Activated CD4-positive, alpha-beta T cell treated with anti-CD3 and anti-CD28 coated beads, Interleukin-2, amount 10 ng/mL, durations not matched to agents 24 days and 14 days (primary cell): ENCODE measurements at regions of chr6 and their contacts with region 1.

Region 1: DNA sequence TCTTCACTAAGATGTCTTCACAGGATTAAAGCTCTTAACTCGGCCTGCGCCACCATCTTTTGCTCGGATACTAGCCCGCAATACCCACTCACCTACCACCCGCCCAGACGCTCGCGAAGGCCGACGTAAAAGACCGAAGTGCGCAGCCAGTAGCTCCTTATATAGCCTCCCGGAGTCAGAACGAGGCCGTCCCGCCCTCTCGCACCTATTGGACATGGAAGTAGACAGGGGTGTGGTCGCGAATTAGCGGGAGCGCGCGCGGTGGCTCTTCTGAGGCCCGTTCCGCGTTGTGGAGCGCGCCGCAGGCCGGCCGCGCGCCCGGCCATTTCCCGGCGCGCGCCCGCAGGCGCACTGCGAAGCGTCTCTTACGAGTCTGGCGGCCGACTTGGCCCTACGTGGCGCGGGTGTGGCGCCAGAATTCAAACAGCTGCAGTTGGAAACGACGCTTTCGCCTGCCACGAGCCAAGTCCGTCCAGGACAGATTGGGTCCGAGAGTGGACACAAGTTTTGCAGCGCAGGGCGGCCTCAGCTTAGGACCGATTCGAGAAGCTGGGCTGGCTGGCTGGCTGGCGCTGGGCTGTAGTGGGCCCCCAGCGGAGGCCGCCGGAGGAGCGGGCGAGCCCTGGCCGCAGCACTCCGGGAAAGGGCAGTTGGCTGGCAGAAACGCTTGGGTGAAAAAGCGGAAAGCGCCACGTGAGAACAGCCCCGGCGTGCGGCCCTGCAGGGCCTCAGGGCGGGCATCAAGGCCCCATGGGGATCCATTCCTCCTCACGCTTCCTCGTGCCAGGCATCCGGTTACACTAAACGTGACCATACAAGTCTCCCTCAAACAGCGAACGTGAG is 36.1 kb upstream of the SYNCRIP start:
- DNase-seq: peak; percentile 99
- H3K4me3 Mint-ChIP-seq: peak overlapping the region; percentile 95
- H3K27ac Mint-ChIP-seq: peak overlapping the region; percentile 97
- H3K4me1 Mint-ChIP-seq: peaks cover 38% of the 10 kb centered on the region
- H3K27me3 Mint-ChIP-seq: no peaks in the 10 kb centered on the region

Region 2: DNA sequence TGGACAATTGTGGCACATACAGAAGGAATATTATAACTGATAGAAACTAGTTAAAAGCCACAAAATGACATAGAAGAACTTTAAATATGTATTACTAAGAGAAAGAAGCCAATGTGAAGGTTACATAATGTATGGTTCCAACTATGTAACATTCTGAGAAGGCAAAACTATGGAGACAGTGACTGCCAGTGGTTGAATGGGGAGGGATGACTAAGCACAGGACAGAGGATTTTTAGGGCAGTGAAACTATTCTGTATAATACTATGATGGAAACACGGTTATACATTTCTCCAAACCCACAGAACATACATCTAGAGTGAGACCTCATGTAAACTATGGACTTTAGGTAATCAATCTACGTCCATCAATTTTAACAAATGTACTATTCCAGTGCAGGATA is 58.5 kb before region 1 on chr6:
- intact Hi-C with region 1: loop called (anchors 10 kb)
- DNase-seq: no peak
- H3K4me3 Mint-ChIP-seq: no peak overlapping the region
- H3K27ac Mint-ChIP-seq: no peak overlapping the region
- H3K4me1 Mint-ChIP-seq: peaks cover 23% of the 10 kb centered on the region
- H3K27me3 Mint-ChIP-seq: no peaks in the 10 kb centered on the region